ENCODE measurements at regions of chr19 and their contacts with region 1.

Region 1: GRCh38 chr19:47514869-47515588 is at the start of gene NAPA:
- DNase-seq: peak; percentile 100
- ATAC-seq: peak; percentile 93
- H3K4me3 ChIP-seq: peak within 1 kb of the TSS; percentile 72 to 100 (median 83)
- H3K4me3 Mint-ChIP-seq: peak within 1 kb of the TSS; percentile 97
- H3K27ac ChIP-seq: peak within 1 kb of the TSS; percentile 96 to 99
- H3K27ac Mint-ChIP-seq: peak within 1 kb of the TSS; percentile 97
- H3K4me1 ChIP-seq: peaks cover 58 to 66% of the 10 kb centered on the region in 2 donors
- H3K4me1 Mint-ChIP-seq: peaks cover 76% of the 10 kb centered on the region
- H3K27me3 ChIP-seq: peaks cover 0 to 4% (median under 1%) of the 10 kb centered on the region in 4 experiments
- H3K27me3 Mint-ChIP-seq: no peaks in the 10 kb centered on the region
- CTCF ChIP-seq: no peak
- total RNA-seq, gene NAPA: 65.8 and 66.8 TPM in 2 replicates

Region 2: DNA sequence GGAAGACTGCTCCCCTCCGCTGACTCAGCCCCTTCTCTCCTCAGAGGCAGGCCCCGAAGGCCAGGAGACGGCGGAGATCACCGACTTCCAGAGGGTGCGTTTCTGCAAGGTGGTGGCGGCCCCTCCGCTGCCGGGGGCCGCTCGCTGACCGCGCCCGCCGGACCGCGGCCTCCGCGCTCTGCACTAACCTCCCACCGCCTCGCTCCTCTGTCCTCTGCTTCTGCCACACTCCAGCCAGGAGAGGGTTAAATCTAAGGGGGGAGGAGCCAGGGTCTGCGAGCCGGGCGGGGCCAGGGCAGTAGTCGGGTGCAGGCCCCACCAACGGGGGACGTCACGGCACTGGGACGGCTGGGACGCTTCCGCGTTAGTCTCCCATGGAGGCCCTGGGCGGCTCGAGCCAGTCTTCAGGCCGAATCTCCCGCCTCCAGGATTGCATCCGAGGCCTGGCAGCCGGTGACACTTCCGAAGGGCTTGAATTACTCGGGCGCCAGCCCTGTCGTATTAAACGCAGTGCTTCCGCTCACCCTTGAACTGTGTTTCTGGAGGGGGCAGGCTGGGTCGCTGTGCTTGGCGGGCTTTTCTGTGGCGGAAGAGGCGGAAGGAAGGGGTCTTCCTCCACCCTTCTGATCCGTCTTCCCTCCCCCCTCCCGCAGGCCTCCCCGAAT is 241.6 kb before region 1 on chr19:
- CTCF ChIA-PET with region 1: no interaction called
- POLR2A ChIA-PET with region 1: interaction called, 4 read pairs
- intact Hi-C with region 1: loop called (anchors 2 kb)
- DNase-seq: peak; percentile 91
- ATAC-seq: peak; percentile 56
- H3K4me3 ChIP-seq: peak overlapping the region; percentile 54 to 99 (median 96)
- H3K4me3 Mint-ChIP-seq: peak overlapping the region; percentile 97
- H3K27ac ChIP-seq: peak overlapping the region; percentile 94 to 98
- H3K27ac Mint-ChIP-seq: peak overlapping the region; percentile 99
- H3K4me1 ChIP-seq: peaks cover 12 to 22% of the 10 kb centered on the region in 2 donors
- H3K4me1 Mint-ChIP-seq: peaks cover 22% of the 10 kb centered on the region
- H3K27me3 ChIP-seq: no peaks in the 10 kb centered on the region
- H3K27me3 Mint-ChIP-seq: no peaks in the 10 kb centered on the region
- CTCF ChIP-seq: no peak

Region 3: GRCh38 chr19:47436712-47437401 is 78.2 kb before region 1 on chr19:
- CTCF ChIA-PET with region 1: interaction called, 14 read pairs
- POLR2A ChIA-PET with region 1: no interaction called
- intact Hi-C with region 1: loop called (anchors 1 kb)
- DNase-seq: peak; percentile 84
- ATAC-seq: peak; percentile 92
- H3K4me3 ChIP-seq: no peak overlapping the region
- H3K4me3 Mint-ChIP-seq: no peak overlapping the region
- H3K27ac ChIP-seq: no peak overlapping the region
- H3K27ac Mint-ChIP-seq: no peak overlapping the region
- H3K4me1 ChIP-seq: peaks cover 3 to 6% of the 10 kb centered on the region in 2 donors
- H3K4me1 Mint-ChIP-seq: peaks cover 5% of the 10 kb centered on the region
- H3K27me3 ChIP-seq: peaks cover 0 to 71% (median 25%) of the 10 kb centered on the region in 4 experiments
- H3K27me3 Mint-ChIP-seq: peaks cover 70% of the 10 kb centered on the region
- CTCF ChIP-seq: peak; percentile 89

Region 4: DNA sequence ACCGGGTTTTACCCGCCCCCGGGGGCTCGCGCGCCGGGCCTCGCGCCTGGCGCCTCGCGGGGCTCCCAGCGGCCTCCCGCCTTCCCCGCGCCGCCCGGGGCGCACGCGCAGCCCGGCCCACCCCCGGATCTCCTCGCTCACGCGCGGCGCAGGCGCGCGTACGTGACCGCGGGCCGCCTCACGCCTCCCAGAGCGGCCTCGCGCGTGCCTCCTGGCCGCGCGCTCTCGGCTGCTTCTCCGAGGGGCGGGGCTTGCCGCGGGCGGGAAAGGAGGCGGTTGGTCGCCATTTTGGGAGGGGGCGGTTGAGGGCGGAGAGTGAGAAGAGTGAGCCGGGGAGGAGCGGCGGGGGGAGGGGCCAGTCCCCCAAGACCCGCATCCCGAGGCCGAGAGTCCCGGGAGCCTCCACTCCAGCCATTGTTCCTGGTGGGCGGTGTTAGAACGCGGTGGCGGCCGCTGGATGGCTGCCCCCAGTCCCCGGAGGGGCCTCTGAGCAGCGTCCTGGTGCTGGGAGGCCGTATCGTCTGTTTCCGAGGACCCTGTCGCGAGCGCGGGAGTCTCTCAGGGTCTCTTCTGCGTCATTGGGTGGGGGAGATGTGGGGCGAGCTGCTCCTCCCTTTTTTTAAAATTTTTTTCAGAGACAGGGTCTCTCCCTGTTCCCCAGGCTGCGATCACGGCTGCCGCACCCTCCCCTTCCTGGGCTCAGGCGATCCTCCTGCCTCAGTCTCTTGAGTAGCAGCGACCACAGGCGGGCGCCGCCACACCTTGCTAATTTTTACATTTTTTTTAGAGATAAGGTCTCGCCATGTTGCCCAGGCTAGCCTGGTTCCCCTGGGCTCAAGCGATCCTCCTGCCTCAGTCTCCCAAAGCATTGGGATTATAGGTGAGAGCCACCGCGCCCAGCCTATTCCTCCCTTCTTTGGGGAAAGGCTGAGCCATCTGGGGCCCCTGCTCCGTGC is 58.3 kb after region 1 on chr19 and contains the start of gene ZNF541:
- CTCF ChIA-PET with region 1: no interaction called
- POLR2A ChIA-PET with region 1: interaction called, 3 read pairs
- intact Hi-C with region 1: loop called (anchors 1 kb)
- DNase-seq: peak; percentile 56
- ATAC-seq: peak; percentile 28
- H3K4me3 ChIP-seq: peak within 1 kb of the TSS in 4 of 5 experiments; percentile 13 to 50 (median 37)
- H3K4me3 Mint-ChIP-seq: peak within 1 kb of the TSS; percentile 44
- H3K27ac ChIP-seq: no peak within 1 kb of the TSS
- H3K27ac Mint-ChIP-seq: no peak within 1 kb of the TSS
- H3K4me1 ChIP-seq: peaks cover 24 to 28% of the 10 kb centered on the region in 2 donors
- H3K4me1 Mint-ChIP-seq: peaks cover 22% of the 10 kb centered on the region
- H3K27me3 ChIP-seq: peaks cover 0 to 46% (median 25%) of the 10 kb centered on the region in 4 experiments
- H3K27me3 Mint-ChIP-seq: peaks cover 40% of the 10 kb centered on the region
- CTCF ChIP-seq: no peak
- total RNA-seq, gene ZNF541: not detected in 2 replicates

Region 5: GRCh38 chr19:47608074-47608918 is 93.3 kb after region 1 on chr19:
- CTCF ChIA-PET with region 1: interaction called, 9 read pairs
- POLR2A ChIA-PET with region 1: interaction called, 3 read pairs
- intact Hi-C with region 1: loop called (anchors 1 kb)
- DNase-seq: peak; percentile 96
- ATAC-seq: peak; percentile 92
- H3K4me3 ChIP-seq: peak overlapping the region; percentile 50 to 98 (median 92)
- H3K4me3 Mint-ChIP-seq: peak overlapping the region; percentile 69
- H3K27ac ChIP-seq: peak overlapping the region; percentile 79 to 96
- H3K27ac Mint-ChIP-seq: peak overlapping the region; percentile 86
- H3K4me1 ChIP-seq: peaks cover 16 to 18% of the 10 kb centered on the region in 2 donors
- H3K4me1 Mint-ChIP-seq: peaks cover 28% of the 10 kb centered on the region
- H3K27me3 ChIP-seq: peaks cover 0 to 11% (median 0%) of the 10 kb centered on the region in 4 experiments
- H3K27me3 Mint-ChIP-seq: no peaks in the 10 kb centered on the region
- CTCF ChIP-seq: peak; percentile 13

Region 6: DNA sequence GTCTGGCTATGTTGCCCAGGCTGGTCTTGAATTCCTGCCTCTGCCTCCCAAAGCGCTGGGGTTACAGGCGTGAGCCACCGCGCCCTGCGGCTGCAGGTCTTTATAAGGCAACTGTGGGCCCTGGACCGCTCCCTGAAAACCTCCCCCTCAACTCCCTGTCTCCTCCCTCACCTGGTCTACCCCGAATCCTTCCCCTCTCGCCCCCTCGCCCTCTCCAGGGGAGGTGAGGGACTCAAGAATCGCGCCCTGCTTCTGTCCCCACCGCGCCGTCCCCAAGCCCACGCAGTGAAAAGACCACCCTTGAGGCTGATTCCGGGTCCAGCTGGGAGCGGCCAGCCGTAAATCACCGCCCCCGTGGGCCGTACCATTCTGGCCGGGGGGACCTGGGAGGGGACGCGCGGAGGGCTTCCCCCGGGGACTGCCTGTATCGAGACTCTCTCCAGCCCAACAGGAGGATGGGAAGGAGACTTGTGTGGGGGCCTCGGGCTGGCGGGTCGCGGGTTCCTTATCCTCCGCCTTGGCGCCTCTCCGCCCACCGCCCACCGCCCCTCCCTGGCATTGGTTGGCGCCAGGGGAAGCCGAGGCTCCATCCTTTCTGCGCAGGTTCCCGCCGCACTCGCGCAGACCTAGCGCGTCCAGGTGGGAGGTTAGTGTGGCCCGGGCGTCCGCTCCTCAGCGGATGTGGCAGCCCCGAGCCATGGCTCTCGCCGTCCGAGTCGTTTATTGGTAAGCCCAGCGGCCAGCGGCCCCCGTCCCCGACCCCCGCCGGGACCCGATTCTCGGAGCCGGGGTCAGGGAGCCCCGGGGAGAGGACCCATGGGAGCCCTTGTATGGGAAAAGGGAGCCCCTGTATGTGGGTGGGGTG is 263.3 kb after region 1 on chr19 and contains the start of gene SELENOW:
- CTCF ChIA-PET with region 1: no interaction called
- POLR2A ChIA-PET with region 1: no interaction called
- intact Hi-C with region 1: loop called (anchors 1 kb)
- DNase-seq: peak; percentile 91
- ATAC-seq: peak; percentile 94
- H3K4me3 ChIP-seq: peak within 1 kb of the TSS; percentile 4 to 80 (median 74)
- H3K4me3 Mint-ChIP-seq: peak within 1 kb of the TSS; percentile 98
- H3K27ac ChIP-seq: peak within 1 kb of the TSS; percentile 87 to 91
- H3K27ac Mint-ChIP-seq: peak within 1 kb of the TSS; percentile 98
- H3K4me1 ChIP-seq: peaks cover 9 to 19% of the 10 kb centered on the region in 2 donors
- H3K4me1 Mint-ChIP-seq: peaks cover 20% of the 10 kb centered on the region
- H3K27me3 ChIP-seq: no peaks in the 10 kb centered on the region
- H3K27me3 Mint-ChIP-seq: no peaks in the 10 kb centered on the region
- CTCF ChIP-seq: no peak
- total RNA-seq, gene SELENOW: 46.3 and 47.7 TPM in 2 replicates

Measured in B cell (primary cell).